CD8-positive, alpha-beta T cell (primary cell): ENCODE measurements at regions of chr18 and their contacts with region 1.

Region 1: DNA sequence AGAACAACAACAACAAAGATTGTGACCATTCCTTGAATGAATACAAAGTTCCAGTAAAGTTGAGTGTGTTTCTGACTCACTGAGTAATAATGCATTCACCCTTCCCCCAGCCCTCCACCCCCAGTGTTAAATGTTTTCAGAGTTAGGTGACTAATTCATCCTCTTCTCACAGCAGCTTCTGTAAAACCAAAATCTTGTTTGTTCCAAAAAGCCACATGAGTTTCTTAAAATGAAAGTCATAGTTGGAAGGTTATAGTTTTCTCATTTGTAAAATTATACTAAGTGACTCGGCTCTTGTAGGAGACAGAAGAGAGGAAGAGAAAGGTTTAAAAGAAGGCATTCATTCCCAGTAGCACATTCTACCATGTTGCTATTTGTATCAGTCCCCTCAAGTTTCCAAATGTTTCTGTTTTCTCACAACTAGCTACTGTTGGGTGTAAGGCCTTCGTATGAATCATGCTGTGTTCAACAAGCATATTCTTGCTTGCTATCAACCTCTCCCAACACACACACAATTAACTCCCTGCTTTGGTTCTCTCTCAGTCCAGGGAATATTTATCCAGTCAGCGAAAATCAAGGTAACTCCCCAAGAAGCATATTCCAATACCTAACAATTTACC is 75.3 kb downstream of the MBD2 start:
- DNase-seq: peak in 1 of 9 experiments; percentile 13
- ATAC-seq: no peak
- H3K4me3 ChIP-seq: no peak overlapping the region
- H3K4me3 Mint-ChIP-seq: no peak overlapping the region
- H3K27ac ChIP-seq: no peak overlapping the region
- H3K27ac Mint-ChIP-seq: no peak overlapping the region
- H3K4me1 ChIP-seq: no peaks in the 10 kb centered on the region
- H3K4me1 Mint-ChIP-seq: no peaks in the 10 kb centered on the region
- H3K27me3 ChIP-seq: no peaks in the 10 kb centered on the region
- H3K27me3 Mint-ChIP-seq: no peaks in the 10 kb centered on the region
- CTCF ChIP-seq: no peak

Region 2: GRCh38 chr18:54197747-54198411 is 48.7 kb after region 1 on chr18:
- CTCF ChIA-PET with region 1: no interaction called
- POLR2A ChIA-PET with region 1: no interaction called
- intact Hi-C with region 1: loop called in 1 of 2 experiments (anchors 5 kb)
- DNase-seq: no peak
- ATAC-seq: no peak
- H3K4me3 ChIP-seq: no peak overlapping the region
- H3K4me3 Mint-ChIP-seq: no peak overlapping the region
- H3K27ac ChIP-seq: no peak overlapping the region
- H3K27ac Mint-ChIP-seq: no peak overlapping the region
- H3K4me1 ChIP-seq: no peaks in the 10 kb centered on the region
- H3K4me1 Mint-ChIP-seq: peaks cover 16% of the 10 kb centered on the region
- H3K27me3 ChIP-seq: no peaks in the 10 kb centered on the region
- H3K27me3 Mint-ChIP-seq: no peaks in the 10 kb centered on the region
- CTCF ChIP-seq: no peak